Endothelial cell of umbilical vein (primary cell): ENCODE measurements at regions of chr16 and their contacts with region 1.

Region 1: DNA sequence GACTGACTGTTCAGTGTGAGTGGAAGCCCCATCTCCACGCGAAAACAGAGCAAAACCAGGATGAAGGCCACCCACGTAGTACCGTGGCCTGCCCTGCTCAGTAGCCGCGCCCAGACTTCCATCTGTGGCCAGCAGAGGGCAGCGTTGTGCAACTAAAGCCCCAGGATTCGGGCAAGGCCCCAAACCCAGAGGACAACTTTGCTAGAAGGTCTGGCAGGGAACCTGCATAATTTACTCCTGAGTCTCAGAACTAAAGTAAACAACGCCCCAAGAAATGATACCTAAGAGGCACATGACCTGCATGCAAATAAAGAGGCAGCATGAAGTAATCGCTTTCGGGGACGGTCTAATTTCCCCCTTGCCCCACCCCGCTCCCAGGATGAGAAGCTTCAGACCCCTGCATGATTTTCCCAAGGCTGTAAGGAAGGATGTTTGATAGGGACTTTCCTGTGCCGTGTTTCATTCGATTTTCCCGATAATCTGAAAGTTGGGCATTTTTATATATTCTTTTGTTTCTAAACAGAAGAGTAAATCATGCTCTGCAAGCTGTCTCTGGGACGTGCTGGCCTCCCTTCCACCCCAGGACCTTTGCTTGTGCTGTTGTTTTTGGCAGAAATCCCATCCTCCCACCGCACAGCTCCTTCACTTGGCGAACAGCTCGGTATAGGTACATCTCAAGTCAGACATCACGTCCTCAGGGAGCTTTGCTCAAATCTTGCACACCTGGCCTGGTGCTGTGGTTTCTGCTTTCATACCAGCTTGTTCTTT is 18.6 kb downstream of the HSBP1 start:
- DNase-seq: peak; percentile 65
- H3K4me3 ChIP-seq: no peak overlapping the region
- H3K27ac ChIP-seq: no peak overlapping the region
- H3K4me1 ChIP-seq: no peaks in the 10 kb centered on the region
- H3K27me3 ChIP-seq: peaks cover under 1 to 11% of the 10 kb centered on the region in 2 experiments
- CTCF ChIP-seq: peak; percentile 89 to 91
- POLR2A ChIP-seq: no peak

Region 2: GRCh38 chr16:83878838-83879237 is 52.5 kb after region 1 on chr16:
- CTCF ChIA-PET with region 1: interaction called, 31 read pairs
- POLR2A ChIA-PET with region 1: no interaction called
- dilution Hi-C with region 1: no loop called
- intact Hi-C with region 1: loop called (anchors 1 kb)
- DNase-seq: peak; percentile 70
- H3K4me3 ChIP-seq: no peak overlapping the region
- H3K27ac ChIP-seq: no peak overlapping the region
- H3K4me1 ChIP-seq: no peaks in the 10 kb centered on the region
- H3K27me3 ChIP-seq: peaks cover 13 to 20% of the 10 kb centered on the region in 2 experiments
- CTCF ChIP-seq: peak; percentile 22 to 38
- POLR2A ChIP-seq: no peak

Region 3: GRCh38 chr16:83887081-83887480 is 60.8 kb after region 1 on chr16:
- CTCF ChIA-PET with region 1: interaction called, 19 read pairs
- POLR2A ChIA-PET with region 1: no interaction called
- dilution Hi-C with region 1: no loop called
- intact Hi-C with region 1: no loop called
- DNase-seq: no peak
- H3K4me3 ChIP-seq: no peak overlapping the region
- H3K27ac ChIP-seq: no peak overlapping the region
- H3K4me1 ChIP-seq: no peaks in the 10 kb centered on the region
- H3K27me3 ChIP-seq: peaks cover 2 to 3% of the 10 kb centered on the region in 2 experiments
- CTCF ChIP-seq: peak in 1 of 2 donors; percentile 10
- POLR2A ChIP-seq: no peak

Region 4: GRCh38 chr16:83926726-83927397 is 100.5 kb after region 1 on chr16:
- CTCF ChIA-PET with region 1: interaction called, 10 read pairs
- POLR2A ChIA-PET with region 1: no interaction called
- dilution Hi-C with region 1: no loop called
- intact Hi-C with region 1: loop called (anchors 1 kb)
- DNase-seq: peak; percentile 54
- H3K4me3 ChIP-seq: no peak overlapping the region
- H3K27ac ChIP-seq: no peak overlapping the region
- H3K4me1 ChIP-seq: peaks cover 3% of the 10 kb centered on the region
- H3K27me3 ChIP-seq: no peaks in the 10 kb centered on the region
- CTCF ChIP-seq: peak; percentile 98
- POLR2A ChIP-seq: no peak